Mucosa of descending colon (tissue), 3 donors: ENCODE measurements at regions of chr4 and their contacts with region 1.

Region 1: DNA sequence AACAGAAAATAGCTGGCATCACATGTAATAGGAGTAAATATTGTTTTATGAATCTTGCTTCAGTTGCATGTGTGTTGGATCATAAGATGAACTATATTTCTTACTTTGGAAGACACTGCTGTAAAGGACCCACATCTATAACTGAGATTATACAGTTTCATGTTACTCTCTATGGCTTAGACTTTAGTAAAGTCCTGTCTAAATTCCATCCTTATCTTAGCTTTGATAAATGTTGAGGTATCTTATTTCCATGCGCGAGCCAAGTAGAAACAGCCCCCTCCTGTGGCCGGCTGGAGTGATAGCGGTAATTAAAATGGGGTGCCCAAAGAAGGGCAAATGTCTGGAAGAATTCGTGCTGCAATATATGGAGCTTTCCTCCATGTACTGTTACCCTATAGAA is 43.0 kb downstream of the CCDC158 start:
- DNase-seq: peak in 2 of 3 donors; percentile 54 to 67
- ATAC-seq: peak; percentile 80
- H3K4me3 ChIP-seq: no peak overlapping the region
- H3K4me1 ChIP-seq: no peaks in the 10 kb centered on the region
- CTCF ChIP-seq: peak; percentile 43

Region 2: GRCh38 chr4:76179398-76180318 is 198.3 kb before region 1 on chr4:
- intact Hi-C with region 1: loop called in 1 of 2 experiments (anchors 10 kb)
- DNase-seq: peak; percentile 81 to 98 (median 89)
- ATAC-seq: peak; percentile 98
- H3K4me3 ChIP-seq: no peak overlapping the region
- H3K4me1 ChIP-seq: no peaks in the 10 kb centered on the region
- CTCF ChIP-seq: peak; percentile 77

Region 3: GRCh38 chr4:76246025-76246424 is 131.9 kb before region 1 on chr4:
- intact Hi-C with region 1: loop called in 1 of 2 experiments (anchors 10 kb)
- DNase-seq: no peak
- ATAC-seq: peak; percentile 44
- H3K4me3 ChIP-seq: no peak overlapping the region
- H3K4me1 ChIP-seq: no peaks in the 10 kb centered on the region
- CTCF ChIP-seq: no peak

Region 4: DNA sequence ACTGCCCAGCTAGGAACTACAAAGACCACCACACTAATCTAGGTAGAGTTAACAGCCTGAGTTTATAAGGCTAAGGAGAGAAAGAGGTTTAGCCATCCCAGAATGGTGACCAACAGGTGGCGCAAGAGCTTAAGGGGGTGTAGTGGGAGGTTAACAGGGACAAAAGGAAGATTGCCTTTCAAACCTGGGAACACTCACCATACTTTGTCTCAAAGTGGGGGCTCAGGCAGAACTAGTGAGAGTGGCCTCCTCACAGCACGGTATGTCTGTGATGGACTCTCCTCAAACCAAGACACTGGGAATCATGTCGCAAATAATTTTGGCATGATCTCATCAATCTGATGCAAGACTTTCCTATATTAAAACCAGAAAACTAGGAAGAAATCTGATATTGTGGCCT is 674.4 kb after region 1 on chr4:
- intact Hi-C with region 1: no loop called
- DNase-seq: peak in 2 of 3 donors; percentile 67 to 80
- ATAC-seq: peak; percentile 76
- H3K4me3 ChIP-seq: no peak overlapping the region
- H3K4me1 ChIP-seq: no peaks in the 10 kb centered on the region
- CTCF ChIP-seq: peak; percentile 47